Left ventricle myocardium inferior (tissue), 1 donor: ENCODE measurements at regions of chr21 and their contacts with region 1.

Region 1: GRCh38 chr21:41283211-41283818 is 33.3 kb upstream of the FAM3B start:
- DNase-seq: no peak
- H3K4me3 ChIP-seq: no peak overlapping the region
- H3K27ac ChIP-seq: no peak overlapping the region
- H3K4me1 ChIP-seq: peaks cover 5% of the 10 kb centered on the region
- H3K27me3 ChIP-seq: peaks cover 26% of the 10 kb centered on the region
- CTCF ChIP-seq: peak; percentile 82

Region 2: GRCh38 chr21:41446571-41446970 is 163.3 kb after region 1 on chr21:
- intact Hi-C with region 1: no loop called
- DNase-seq: no peak
- H3K4me3 ChIP-seq: no peak overlapping the region
- H3K27ac ChIP-seq: no peak overlapping the region
- H3K4me1 ChIP-seq: no peaks in the 10 kb centered on the region
- H3K27me3 ChIP-seq: no peaks in the 10 kb centered on the region
- CTCF ChIP-seq: no peak

Region 3: GRCh38 chr21:41460578-41461527 is 177.5 kb after region 1 on chr21:
- intact Hi-C with region 1: loop called (anchors 2 kb)
- DNase-seq: peak; percentile 64
- H3K4me3 ChIP-seq: no peak overlapping the region
- H3K27ac ChIP-seq: no peak overlapping the region
- H3K4me1 ChIP-seq: no peaks in the 10 kb centered on the region
- H3K27me3 ChIP-seq: peaks cover 20% of the 10 kb centered on the region
- CTCF ChIP-seq: peak; percentile 91